ENCODE measurements at regions of chr14 and their contacts with region 1.

Region 1: GRCh38 chr14:58812050-58812910 is 174.5 kb downstream of the DACT1 start:
- DNase-seq: peak in 1 of 10 donors; percentile 16
- H3K4me3 ChIP-seq: no peak overlapping the region
- H3K27ac ChIP-seq: peak overlapping the region in 56 of 59 donors; percentile 21 to 96 (median 74)
- H3K27me3 ChIP-seq: no peaks in the 10 kb centered on the region
- CTCF ChIP-seq: no peak

Region 2: GRCh38 chr14:58864751-58865513 is 52.7 kb after region 1 on chr14:
- intact Hi-C with region 1: loop called in 1 of 2 experiments (anchors 1 kb)
- DNase-seq: peak in 3 of 10 donors; percentile 42 to 65 (median 43)
- H3K4me3 ChIP-seq: no peak overlapping the region
- H3K27ac ChIP-seq: peak overlapping the region in 6 of 59 donors; percentile 10 to 68 (median 30)
- H3K27me3 ChIP-seq: peaks cover 0 to 3% (median 0%) of the 10 kb centered on the region in 45 donors
- CTCF ChIP-seq: no peak